Activated B cell treated with CpG ODN at 0.5 μM for 24 hours (primary cell): ENCODE measurements at regions of chr18 and their contacts with region 1.

Region 1: DNA sequence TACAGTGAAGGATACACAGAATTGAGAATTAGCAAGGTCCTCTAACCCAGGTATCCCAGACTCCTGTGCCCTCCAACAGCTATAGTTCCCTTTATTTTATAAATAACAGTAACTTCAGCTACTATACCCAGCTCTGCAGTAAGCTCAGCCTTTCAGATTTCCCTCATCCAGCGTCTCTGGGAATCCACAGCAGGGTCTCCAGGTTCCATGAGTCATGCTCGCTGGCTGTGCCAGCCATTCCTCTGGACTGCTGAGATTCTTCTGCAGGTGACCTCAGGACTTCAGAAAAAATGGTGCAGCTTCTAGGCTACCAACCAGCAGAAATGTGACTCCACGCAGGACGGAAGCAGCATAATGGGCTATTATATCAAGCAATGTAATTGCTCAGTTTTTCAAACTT is 419.3 kb downstream of the ZNF516 start:
- DNase-seq: no peak
- ATAC-seq: no peak
- H3K4me3 Mint-ChIP-seq: no peak overlapping the region
- H3K27ac Mint-ChIP-seq: no peak overlapping the region
- H3K4me1 Mint-ChIP-seq: no peaks in the 10 kb centered on the region
- H3K27me3 Mint-ChIP-seq: no peaks in the 10 kb centered on the region
- CTCF ChIP-seq: no peak

Region 2: GRCh38 chr18:75773618-75774017 is 302.2 kb before region 1 on chr18:
- CTCF ChIA-PET with region 1: no interaction called
- POLR2A ChIA-PET with region 1: no interaction called
- intact Hi-C with region 1: no loop called
- DNase-seq: no peak
- ATAC-seq: no peak
- H3K4me3 Mint-ChIP-seq: no peak overlapping the region
- H3K27ac Mint-ChIP-seq: no peak overlapping the region
- H3K4me1 Mint-ChIP-seq: no peaks in the 10 kb centered on the region
- H3K27me3 Mint-ChIP-seq: no peaks in the 10 kb centered on the region
- CTCF ChIP-seq: no peak

Region 3: GRCh38 chr18:76234291-76235060 is 158.7 kb after region 1 on chr18:
- CTCF ChIA-PET with region 1: no interaction called
- POLR2A ChIA-PET with region 1: no interaction called
- intact Hi-C with region 1: no loop called
- DNase-seq: no peak
- ATAC-seq: no peak
- H3K4me3 Mint-ChIP-seq: no peak overlapping the region
- H3K27ac Mint-ChIP-seq: no peak overlapping the region
- H3K4me1 Mint-ChIP-seq: no peaks in the 10 kb centered on the region
- H3K27me3 Mint-ChIP-seq: no peaks in the 10 kb centered on the region
- CTCF ChIP-seq: no peak

Region 4: GRCh38 chr18:76747676-76748075 is 671.9 kb after region 1 on chr18:
- CTCF ChIA-PET with region 1: no interaction called
- POLR2A ChIA-PET with region 1: no interaction called
- intact Hi-C with region 1: loop called (anchors 5 kb)
- DNase-seq: no peak
- ATAC-seq: no peak
- H3K4me3 Mint-ChIP-seq: no peak overlapping the region
- H3K27ac Mint-ChIP-seq: no peak overlapping the region
- H3K4me1 Mint-ChIP-seq: no peaks in the 10 kb centered on the region
- H3K27me3 Mint-ChIP-seq: peaks cover 3% of the 10 kb centered on the region
- CTCF ChIP-seq: no peak